ENCODE measurements at regions of chr6 and their contacts with region 1.

Region 1: DNA sequence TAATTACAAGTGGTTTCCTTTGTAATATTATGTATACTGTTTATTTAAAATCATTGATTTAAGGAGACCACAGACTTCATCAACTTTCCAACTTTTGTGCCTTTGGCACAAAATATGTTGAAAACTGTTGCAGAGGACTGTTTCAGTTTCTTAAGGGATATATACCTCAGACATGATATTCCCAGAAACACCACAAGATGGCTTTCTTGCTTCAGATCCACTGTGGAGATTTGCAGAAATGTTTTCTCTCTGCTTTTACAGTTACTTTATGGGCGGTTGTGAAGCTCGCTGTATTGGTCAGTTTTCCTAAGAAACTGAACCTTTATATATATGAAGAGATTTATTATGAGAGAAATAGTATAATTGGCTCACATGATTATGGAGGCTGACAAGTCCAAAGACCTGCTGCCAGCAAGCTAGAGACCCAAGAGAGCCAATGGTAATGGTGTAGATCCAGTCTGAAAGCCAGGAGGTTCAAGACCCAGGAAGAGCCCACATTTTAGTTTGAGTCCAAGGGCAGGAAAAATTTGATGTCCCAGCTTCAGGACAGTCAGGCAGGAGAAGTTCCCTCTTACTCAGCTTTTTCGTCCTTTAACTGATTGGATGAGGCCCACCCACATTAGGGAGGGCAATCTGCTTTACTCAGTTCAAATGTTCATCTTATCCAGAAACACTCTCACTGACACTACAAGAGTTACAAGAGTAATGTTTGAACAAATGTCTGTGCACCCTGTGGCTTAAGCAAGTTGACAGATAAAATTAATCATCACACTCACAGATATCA is 12.8 kb downstream of the ME1 start:
- DNase-seq: no peak
- H3K4me3 ChIP-seq: no peak overlapping the region
- H3K27ac ChIP-seq: no peak overlapping the region
- H3K27me3 ChIP-seq: no peaks in the 10 kb centered on the region
- CTCF ChIP-seq: peak in 55 of 56 donors; percentile 45 to 80 (median 65)

Region 2: DNA sequence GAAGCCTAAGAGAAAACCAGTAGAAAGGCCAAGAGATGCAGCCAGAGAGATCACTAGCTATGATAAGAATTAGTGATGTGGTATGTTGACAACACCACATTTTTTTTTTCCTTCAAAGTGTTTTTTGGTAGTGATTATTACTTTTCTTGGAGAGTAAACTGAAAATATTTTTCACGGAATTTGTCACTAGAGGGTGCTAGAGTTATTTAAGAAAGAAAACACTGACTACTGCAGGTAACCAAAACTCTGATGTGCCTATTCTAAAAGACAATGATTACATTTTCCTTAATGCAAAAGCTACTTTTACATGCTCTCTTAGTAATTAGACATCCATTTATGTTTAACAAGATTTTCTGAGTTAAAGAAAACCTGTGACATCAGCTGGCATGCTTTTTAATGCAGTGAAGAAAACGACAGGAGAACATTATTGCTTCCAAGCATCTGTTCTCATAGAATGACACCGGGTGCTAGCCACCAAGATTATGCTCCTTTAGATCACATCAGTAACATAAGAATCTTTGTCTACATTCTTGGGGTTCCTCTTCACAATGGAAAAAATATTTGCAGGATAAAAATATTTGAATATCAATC is 196.1 kb before region 1 on chr6:
- intact Hi-C with region 1: loop called in 1 of 2 experiments (anchors 10 kb)
- DNase-seq: no peak
- H3K4me3 ChIP-seq: no peak overlapping the region
- H3K27ac ChIP-seq: no peak overlapping the region
- H3K27me3 ChIP-seq: no peaks in the 10 kb centered on the region
- CTCF ChIP-seq: peak; percentile 30 to 84 (median 64)

Region 3: DNA sequence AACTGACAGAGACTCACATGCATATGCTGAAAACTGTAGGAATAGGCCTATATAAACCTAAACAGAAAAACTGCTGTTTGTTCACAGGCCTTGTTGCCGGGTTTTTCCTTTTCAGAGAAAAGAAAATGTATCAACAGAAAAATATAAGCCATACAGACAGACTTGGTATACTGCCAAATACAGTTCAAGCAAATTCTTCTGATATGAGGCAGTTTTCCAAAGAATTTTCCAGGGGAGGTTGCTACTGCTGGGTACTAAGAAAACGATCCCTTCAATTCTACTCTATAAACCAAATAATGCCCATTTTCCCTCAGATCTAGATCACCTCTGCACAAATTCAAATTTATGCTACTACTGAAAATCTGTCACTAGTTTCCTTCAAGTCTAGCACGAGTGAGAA is 46.6 kb before region 1 on chr6:
- intact Hi-C with region 1: no loop called
- DNase-seq: no peak
- H3K4me3 ChIP-seq: no peak overlapping the region
- H3K27ac ChIP-seq: no peak overlapping the region
- H3K27me3 ChIP-seq: no peaks in the 10 kb centered on the region
- CTCF ChIP-seq: no peak

Region 4: DNA sequence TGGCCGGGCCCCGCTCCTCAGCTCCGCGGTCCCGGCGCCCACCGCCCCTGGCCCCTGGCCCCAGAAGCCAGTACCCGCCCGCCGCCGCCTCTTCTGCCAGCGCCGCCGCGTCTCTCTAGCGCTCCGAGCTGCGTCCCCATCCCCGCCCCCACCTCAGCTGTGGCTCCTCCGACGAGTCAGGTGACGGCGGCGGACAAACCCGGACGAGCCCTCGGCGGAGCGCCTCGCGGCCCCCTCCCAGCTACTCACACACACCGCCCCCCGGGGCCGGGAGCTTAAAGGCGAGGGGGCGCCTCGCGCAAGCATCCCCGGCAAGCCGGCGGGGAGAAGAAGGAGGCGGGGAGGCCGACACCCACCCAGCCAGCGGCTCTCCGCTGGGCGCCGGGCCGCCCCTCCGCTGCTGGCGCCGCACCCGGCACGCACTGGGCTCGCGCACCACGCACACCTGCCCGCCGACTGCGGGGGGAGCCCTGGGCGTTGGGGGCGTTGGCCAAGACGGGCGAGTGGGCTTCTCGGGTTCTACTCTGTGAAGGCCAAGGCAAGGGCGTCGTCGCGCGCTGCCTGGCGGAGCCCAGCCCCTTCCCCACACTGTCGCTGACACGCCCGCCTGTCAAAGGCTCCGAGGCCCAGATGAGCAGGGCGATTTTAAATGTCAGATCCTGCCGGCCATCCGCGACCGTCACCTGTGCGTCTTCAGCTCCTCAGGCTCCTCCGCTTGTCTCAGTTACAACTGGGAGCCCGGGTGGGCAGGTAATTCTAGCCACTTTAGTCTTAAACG is 291.1 kb after region 1 on chr6 and contains the start of gene SNAP91:
- intact Hi-C with region 1: no loop called
- DNase-seq: peak; percentile 61 to 91 (median 86)
- H3K4me3 ChIP-seq: peak within 1 kb of the TSS; percentile 53 to 91 (median 78)
- H3K27ac ChIP-seq: peak within 1 kb of the TSS in 58 of 59 donors; percentile 42 to 93 (median 83)
- H3K27me3 ChIP-seq: no peaks in the 10 kb centered on the region
- CTCF ChIP-seq: peak in 2 of 56 donors; percentile 12 to 19
- total RNA-seq, gene SNAP91: 75.1 to 334 (median 237) TPM

Region 5: DNA sequence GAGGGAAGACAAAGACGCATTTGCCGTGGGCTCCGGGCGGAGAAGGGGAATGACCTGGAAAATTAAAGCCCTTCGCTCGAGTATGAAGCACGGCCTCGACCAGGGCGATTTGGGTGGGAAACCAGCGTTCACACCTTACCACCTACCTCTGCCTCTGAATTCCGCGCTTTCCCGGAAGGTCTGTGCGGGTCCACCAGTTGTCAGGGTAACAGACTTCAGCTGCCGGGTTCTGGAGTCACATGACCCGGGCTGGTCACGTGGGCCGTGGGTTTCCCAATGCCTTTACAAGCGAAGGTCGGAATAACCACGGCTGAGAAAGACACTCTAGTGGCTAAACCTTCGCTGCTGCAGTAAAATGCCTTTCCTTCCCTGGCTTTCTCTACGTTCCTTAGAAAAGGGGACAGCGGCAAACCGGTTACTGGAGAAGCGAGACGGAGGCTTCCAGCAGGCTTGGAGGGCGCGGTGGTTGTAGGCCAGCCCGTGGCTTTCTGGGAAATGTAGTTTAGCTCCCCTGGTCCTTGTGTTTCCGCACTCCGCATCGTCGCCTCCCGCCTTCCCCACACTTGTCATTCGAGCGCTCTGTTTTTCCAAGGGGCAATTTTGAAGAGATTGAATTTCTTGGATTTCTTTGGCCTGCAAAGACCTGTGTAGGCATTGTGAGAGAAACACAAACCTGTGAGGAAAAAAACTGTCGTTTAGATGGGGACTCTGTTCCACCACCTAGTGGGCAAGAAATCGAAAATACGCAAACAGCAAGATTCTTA is 809.5 kb after region 1 on chr6 and contains the start of gene CEP162:
- intact Hi-C with region 1: no loop called
- DNase-seq: peak; percentile 95 to 100 (median 96)
- H3K4me3 ChIP-seq: peak within 1 kb of the TSS; percentile 59 to 99 (median 85)
- H3K27ac ChIP-seq: peak within 1 kb of the TSS; percentile 79 to 99 (median 95)
- H3K27me3 ChIP-seq: peaks cover 0 to 15% (median 0%) of the 10 kb centered on the region in 45 donors
- CTCF ChIP-seq: peak; percentile 55 to 84 (median 72)
- total RNA-seq, gene CEP162: 6.2 to 20.6 (median 11.2) TPM

Measured in dorsolateral prefrontal cortex (tissue), 120 donors.